Activated naive CD4-positive, alpha-beta T cell treated with anti-CD3 and anti-CD28 coated beads for 36 hours (primary cell): ENCODE measurements at regions of chr2 and their contacts with region 1.

Region 1: GRCh38 chr2:237512774-237513466 is 25.9 kb downstream of the MLPH start:
- DNase-seq: peak; percentile 90
- H3K4me3 Mint-ChIP-seq: no peak overlapping the region
- H3K27ac Mint-ChIP-seq: no peak overlapping the region
- H3K4me1 Mint-ChIP-seq: no peaks in the 10 kb centered on the region
- H3K27me3 Mint-ChIP-seq: no peaks in the 10 kb centered on the region

Region 2: DNA sequence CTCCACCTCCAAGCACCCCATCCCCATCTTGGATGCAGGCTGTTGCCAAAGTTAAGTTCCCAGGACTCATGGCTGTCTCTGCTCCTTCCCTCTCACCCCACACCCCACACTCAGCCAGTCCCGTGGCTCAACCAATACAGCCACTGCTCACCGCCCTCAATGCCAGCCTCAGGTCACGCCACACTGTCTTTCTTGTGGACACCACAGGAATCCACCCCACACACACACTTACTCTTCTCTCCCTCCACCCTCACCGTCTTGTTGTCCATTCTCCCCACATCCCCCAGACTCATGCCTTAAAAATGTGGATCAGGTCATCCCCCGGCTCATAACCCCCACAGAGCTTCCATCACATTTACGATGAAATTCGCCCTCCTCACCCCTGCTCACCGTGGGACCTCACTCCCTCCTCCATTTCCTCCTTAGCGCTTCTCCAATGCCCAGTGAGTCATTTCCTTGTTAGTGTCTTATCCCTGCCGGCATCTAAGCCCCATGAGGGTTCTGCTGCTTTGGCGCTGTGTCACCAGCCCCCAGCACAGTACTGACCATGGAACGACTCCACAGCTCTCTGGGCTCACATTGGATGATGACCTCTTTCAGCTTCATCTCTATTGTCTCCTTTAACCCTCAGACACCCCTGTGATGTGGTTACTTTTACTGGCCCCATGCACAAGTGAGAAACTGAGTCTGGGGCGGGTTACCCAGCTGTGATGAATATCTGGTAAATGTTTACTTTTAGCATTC is 12.1 kb before region 1 on chr2:
- CTCF ChIA-PET with region 1: interaction called, 13 read pairs
- intact Hi-C with region 1: no loop called
- DNase-seq: no peak
- H3K4me3 Mint-ChIP-seq: no peak overlapping the region
- H3K27ac Mint-ChIP-seq: no peak overlapping the region
- H3K4me1 Mint-ChIP-seq: no peaks in the 10 kb centered on the region
- H3K27me3 Mint-ChIP-seq: peaks cover 17% of the 10 kb centered on the region

Region 3: DNA sequence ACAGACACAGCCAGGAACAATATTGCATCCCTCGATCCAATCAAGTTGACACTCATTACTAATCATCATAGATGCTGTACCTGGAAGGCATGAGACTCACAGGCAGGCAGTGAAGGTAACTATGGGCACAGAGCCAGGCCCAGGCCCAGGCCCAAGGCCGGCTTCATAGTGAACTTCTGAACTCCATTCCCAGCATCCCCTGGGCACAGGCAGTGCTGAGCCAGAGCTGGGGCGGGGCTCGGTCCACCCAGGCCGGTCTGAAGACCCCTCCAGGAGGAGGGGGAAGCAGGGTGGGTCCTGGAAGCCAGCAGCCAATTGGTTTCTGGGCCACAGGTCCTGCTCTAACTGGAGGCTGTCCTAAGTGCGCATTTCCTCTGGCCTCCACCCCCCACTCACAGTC is 11.7 kb after region 1 on chr2:
- CTCF ChIA-PET with region 1: interaction called, 10 read pairs
- intact Hi-C with region 1: no loop called
- DNase-seq: no peak
- H3K4me3 Mint-ChIP-seq: no peak overlapping the region
- H3K27ac Mint-ChIP-seq: no peak overlapping the region
- H3K4me1 Mint-ChIP-seq: no peaks in the 10 kb centered on the region
- H3K27me3 Mint-ChIP-seq: no peaks in the 10 kb centered on the region

Region 4: DNA sequence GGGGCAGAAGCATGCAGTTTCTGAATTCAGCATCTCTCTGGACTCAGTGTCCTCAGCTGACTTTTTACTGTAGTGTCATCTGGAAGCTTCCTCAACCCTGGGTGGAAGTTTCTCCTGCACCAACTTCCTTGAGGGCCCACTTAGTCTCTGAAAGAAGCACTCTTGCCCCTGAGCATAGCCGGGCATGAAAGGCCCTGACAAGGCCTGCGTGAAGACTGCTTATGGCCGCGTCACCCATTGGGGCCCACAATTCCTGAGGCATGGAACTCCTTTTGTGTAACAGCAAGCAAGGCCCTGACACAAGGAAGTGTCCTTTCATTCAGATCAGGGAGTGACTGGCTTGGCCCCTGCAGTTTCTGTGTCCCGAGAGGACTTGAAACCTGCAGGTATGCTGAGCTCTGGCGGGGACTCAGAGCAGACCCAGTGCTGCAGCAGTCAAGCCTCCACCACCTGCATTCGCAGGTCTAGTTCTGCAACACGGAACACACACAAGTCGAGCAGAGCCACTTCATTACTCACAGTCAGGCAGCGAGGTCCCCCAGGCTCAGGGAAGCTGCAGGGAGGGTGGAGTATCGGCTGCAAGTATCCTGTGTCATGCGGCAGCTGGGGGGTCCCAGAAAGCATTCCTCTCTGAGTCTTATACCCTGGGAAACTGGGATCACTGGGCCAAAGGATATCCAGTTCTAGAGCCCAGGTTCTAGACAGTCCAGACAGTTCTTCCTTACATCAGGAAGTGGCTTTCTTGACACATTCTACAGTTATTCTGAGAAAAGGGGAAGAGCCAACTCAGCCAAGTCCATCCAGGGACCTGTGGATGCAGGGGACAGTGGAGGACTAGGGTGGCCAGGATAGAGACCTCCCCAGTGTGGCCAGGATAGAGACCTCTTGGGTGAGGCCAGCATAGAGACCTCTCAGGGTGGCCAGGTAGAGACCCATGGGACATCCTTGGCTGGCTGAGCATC is 17.8 kb after region 1 on chr2:
- CTCF ChIA-PET with region 1: interaction called, 18 read pairs
- intact Hi-C with region 1: no loop called
- DNase-seq: no peak
- H3K4me3 Mint-ChIP-seq: no peak overlapping the region
- H3K27ac Mint-ChIP-seq: no peak overlapping the region
- H3K4me1 Mint-ChIP-seq: no peaks in the 10 kb centered on the region
- H3K27me3 Mint-ChIP-seq: no peaks in the 10 kb centered on the region

Region 5: DNA sequence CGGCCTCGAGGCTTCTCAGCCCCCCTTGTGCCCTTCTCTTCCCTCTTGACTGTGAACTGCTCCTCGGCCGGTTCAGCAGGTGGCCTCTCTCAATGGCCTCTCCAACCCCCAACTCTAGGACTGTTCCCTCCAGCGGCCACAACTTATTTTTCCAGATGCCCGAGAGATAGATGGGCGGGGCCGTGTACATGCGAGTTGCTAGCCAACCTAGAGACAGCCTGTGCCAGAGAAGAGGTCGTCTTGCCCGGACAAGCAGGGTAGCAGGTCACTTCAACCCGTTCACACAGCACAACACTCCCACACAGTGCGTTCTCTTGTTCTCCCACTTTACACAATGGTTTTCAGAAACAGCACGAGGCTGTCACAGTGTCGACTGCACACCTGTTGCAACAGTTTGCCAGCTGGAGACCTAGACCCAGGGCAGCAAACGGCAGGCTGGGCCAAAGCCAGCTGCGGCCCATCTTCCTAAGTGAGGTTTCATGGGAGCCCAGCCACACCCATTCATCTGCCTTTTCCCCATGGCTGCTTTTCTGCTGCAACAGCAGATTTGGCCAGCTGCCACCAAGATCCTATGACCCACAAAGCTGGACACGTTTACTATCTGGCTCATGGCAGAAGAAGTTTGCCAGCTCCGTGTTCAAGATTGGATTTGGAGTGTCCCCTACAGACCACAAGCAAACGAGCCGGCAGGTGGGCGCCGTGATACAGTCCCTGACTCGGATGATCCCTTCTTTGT is 46.2 kb after region 1 on chr2:
- CTCF ChIA-PET with region 1: interaction called, 13 read pairs
- intact Hi-C with region 1: no loop called
- DNase-seq: no peak
- H3K4me3 Mint-ChIP-seq: no peak overlapping the region
- H3K27ac Mint-ChIP-seq: no peak overlapping the region
- H3K4me1 Mint-ChIP-seq: peaks cover 13% of the 10 kb centered on the region
- H3K27me3 Mint-ChIP-seq: peaks cover 7% of the 10 kb centered on the region

Region 6: GRCh38 chr2:237566401-237567235 is 53.7 kb after region 1 on chr2 and contains the start of gene PRLH:
- CTCF ChIA-PET with region 1: interaction called, 300 read pairs
- intact Hi-C with region 1: no loop called
- DNase-seq: no peak
- H3K4me3 Mint-ChIP-seq: no peak within 1 kb of the TSS
- H3K27ac Mint-ChIP-seq: no peak within 1 kb of the TSS
- H3K4me1 Mint-ChIP-seq: peaks cover under 1% of the 10 kb centered on the region
- H3K27me3 Mint-ChIP-seq: no peaks in the 10 kb centered on the region
- total RNA-seq, gene PRLH: not detected

Region 7: GRCh38 chr2:237581751-237582746 is 69.1 kb after region 1 on chr2:
- CTCF ChIA-PET with region 1: interaction called, 300 read pairs
- intact Hi-C with region 1: no loop called
- DNase-seq: peak; percentile 87
- H3K4me3 Mint-ChIP-seq: no peak overlapping the region
- H3K27ac Mint-ChIP-seq: peak overlapping the region; percentile 56
- H3K4me1 Mint-ChIP-seq: peaks cover 4% of the 10 kb centered on the region
- H3K27me3 Mint-ChIP-seq: no peaks in the 10 kb centered on the region

Region 8: GRCh38 chr2:237682856-237683670 is 170.1 kb after region 1 on chr2:
- CTCF ChIA-PET with region 1: no interaction called
- intact Hi-C with region 1: no loop called
- DNase-seq: no peak
- H3K4me3 Mint-ChIP-seq: no peak overlapping the region
- H3K27ac Mint-ChIP-seq: no peak overlapping the region
- H3K4me1 Mint-ChIP-seq: peaks cover 18% of the 10 kb centered on the region
- H3K27me3 Mint-ChIP-seq: no peaks in the 10 kb centered on the region